ENCODE measurements at regions of chr9 and their contacts with region 1.

Region 1: DNA sequence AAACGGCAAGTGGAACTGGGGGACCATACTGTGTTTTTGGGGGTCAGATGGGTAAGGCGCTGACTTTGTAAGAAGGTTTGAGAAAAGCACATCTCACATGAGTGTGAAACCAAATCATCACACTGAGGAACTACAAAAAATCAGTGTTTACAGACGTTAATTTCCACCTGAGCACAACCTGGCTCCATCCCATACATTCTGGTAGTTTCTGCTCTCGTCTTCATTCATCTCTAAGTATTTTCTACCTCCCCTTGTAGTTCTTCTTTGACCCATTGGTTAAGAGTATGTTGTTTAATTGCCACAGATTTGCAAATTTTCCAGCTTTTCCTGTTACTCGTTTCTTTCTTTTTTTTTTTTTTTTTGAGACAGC is 8.9 kb upstream of the DPP7 start:
- DNase-seq: no peak
- ATAC-seq: no peak

Region 2: DNA sequence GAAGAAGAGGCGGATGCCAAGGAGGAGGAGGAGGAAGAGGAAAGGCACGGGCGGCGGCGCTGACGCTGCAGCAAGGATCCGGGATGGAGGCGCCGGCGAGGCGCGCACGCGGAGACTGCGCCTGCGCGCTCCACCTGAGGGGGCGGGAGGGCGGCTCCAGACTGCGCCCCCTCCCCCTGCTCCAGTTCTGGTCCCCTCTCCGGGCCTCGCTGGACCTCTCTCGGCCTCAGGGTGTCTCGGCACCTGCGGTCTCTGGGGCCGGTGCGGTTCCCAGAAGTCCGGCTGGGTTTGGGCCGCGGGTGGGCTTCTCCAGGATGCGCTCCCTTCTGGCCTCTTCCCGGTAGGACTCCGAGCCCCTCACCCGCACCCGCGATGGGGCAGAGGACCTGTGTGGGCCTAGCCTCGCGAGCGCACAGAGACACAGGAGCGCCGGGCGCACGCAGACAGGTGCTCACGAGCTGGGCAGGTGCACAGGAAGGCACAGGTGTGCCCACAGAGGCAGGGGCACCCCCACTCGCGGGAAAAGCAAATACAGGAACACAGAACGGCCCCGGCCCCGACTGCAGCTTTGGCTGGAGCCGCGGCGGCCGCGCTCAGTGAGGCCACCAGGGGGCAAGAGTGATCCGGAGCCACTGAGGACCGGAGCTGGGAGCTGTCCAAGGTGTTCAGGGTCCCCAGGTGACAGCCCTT is 77.2 kb before region 1 on chr9 and contains the start of gene NPDC1:
- intact Hi-C with region 1: no loop called
- DNase-seq: peak; percentile 84
- ATAC-seq: peak; percentile 71 to 76
- total RNA-seq, gene NPDC1: 75.4 to 87.3 TPM

Region 3: GRCh38 chr9:137067860-137068538 is 55.5 kb before region 1 on chr9:
- intact Hi-C with region 1: no loop called
- DNase-seq: peak; percentile 74
- ATAC-seq: peak; percentile 37 to 42

Region 4: GRCh38 chr9:137077758-137078693 is 45.4 kb before region 1 on chr9:
- intact Hi-C with region 1: no loop called
- DNase-seq: no peak
- ATAC-seq: peak; percentile 5 to 12

Region 5: DNA sequence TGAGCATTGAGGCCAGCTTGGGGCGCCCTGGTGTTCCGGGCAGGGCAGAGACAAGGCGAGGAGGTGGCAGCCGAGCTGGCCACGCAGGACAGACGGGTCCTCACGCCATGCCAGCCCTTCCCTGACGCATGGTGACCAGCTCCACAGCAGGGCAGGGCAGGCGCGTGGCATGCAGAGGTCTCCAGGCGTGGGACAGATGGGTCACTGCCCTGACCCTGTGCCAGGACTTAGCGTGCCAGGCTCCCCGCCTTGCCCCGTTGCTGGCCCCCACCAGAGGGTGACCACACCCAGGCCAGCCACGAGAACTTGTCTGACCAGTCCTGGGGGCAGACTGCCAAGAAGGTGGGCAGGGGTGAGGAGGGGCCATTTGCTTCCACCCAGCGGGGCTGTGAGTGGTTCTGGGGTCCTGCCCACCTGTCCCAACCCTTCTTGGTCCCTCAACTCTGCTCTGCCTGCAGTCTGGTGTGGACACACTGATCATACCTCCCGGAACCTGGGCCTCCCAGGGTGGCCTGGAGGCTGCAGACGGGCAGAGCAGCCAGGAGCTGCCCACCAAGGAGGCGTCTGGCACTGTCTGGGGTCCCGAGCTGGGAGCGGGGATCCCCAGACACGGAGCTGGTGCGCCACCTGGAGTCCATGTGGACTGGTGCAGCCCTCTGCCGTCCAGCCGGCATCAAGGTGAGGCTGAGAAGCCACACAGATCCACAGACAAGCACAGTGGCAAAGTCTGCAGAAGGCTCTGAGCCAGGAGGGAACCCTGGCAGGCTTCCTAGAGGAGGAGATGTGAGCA is 103.8 kb after region 1 on chr9 and contains the start of gene RNF224:
- intact Hi-C with region 1: loop called (anchors 5 kb)
- DNase-seq: peak; percentile 81
- ATAC-seq: peak; percentile 14 to 44
- total RNA-seq, gene RNF224: not detected

Region 6: GRCh38 chr9:137233143-137233980 is 109.9 kb after region 1 on chr9:
- intact Hi-C with region 1: loop called (anchors 5 kb)
- DNase-seq: no peak
- ATAC-seq: no peak

Region 7: DNA sequence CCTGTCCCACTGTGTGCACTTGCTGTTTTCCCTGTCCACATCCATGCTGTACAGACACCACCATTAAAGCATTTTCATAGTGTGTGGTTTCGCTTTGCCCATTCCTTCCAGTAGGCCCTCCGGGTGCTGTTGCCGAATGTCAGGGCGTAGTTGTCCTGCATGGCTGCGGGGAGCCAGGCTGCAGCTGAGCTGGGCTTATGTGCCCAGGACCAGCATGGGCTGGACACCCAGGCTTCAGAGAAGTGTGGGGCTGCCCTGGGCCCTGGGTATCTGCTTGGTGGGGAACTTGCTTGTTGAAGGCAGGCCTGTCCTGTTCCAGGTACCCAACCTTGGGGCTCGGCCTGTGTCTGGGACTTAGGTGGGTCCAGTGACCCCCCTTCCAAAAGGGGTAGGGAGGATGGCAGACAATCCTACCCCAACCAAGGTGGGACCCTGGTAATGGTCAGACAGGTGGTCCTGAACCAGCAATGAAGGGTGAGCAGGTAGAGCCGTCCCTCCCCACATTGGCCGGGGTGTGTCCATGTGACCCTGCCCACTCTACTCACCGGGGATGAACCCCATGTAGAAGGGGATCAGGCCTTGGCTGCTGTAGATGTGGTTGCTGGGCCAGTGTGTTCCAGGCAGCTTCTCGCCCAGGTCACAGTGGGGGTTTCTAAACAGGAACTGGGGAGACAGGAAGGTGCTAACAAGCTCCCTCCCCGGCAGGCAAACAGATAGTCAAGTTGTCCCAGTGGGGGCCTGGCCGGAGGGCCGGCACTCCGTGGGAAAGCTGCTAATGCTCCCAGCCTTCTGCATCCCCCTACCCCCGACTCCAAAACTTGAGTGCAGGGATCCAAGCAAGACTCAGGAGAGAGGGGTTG is 120.4 kb after region 1 on chr9:
- intact Hi-C with region 1: no loop called
- DNase-seq: no peak
- ATAC-seq: no peak

Measured in left cardiac atrium (tissue), 4 donors.